Activated T-helper 2 cell treated with anti-CD3 and anti-CD28 coated beads, Interferon-gamma antibody, Interleukin-2, Interleukin-4, amounts not matched to agents 10 μg/mL and 5 μg/mL and 100 μg/mL, durations not matched to agents 14 hours and 24 hours and 36 hours (primary cell): ENCODE measurements at regions of chr18 and their contacts with region 1.

Region 1: DNA sequence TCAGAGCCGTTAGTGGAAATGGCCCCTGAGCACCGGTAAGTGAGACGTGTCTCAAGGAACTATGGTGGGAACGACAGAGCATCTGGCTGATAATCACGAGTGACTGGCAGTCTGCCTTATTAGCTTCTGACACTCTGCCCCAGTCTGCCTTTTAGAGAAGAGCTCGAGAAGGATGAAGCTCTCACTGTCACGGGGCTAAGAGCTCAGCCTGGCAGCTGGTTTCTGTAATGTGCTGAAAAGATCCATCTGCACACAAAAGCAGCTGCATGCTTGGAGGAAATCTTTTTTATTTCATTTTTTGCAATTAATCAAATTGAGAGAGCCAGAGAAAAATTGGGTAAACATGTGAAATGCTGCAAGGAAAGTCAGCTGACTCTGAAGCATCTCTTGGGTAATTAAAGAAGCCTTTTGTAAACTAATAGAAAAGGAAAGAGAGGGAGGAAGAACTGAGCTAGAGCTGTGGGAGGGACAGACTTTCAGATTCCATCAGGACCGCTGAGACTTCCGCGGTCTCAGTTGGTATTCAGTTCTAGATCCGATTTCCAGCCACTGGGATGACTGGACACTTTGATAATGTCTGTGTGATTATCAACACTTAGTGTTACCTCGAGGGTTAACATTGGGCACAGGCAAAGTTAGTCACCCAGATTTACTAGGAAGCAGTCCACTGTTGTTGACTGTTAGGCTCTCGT is 24.4 kb downstream of the MBP start:
- DNase-seq: no peak
- H3K4me3 Mint-ChIP-seq: no peak overlapping the region
- H3K27ac Mint-ChIP-seq: peak overlapping the region; percentile 62
- H3K4me1 Mint-ChIP-seq: peaks cover 85% of the 10 kb centered on the region
- H3K27me3 Mint-ChIP-seq: no peaks in the 10 kb centered on the region

Region 2: DNA sequence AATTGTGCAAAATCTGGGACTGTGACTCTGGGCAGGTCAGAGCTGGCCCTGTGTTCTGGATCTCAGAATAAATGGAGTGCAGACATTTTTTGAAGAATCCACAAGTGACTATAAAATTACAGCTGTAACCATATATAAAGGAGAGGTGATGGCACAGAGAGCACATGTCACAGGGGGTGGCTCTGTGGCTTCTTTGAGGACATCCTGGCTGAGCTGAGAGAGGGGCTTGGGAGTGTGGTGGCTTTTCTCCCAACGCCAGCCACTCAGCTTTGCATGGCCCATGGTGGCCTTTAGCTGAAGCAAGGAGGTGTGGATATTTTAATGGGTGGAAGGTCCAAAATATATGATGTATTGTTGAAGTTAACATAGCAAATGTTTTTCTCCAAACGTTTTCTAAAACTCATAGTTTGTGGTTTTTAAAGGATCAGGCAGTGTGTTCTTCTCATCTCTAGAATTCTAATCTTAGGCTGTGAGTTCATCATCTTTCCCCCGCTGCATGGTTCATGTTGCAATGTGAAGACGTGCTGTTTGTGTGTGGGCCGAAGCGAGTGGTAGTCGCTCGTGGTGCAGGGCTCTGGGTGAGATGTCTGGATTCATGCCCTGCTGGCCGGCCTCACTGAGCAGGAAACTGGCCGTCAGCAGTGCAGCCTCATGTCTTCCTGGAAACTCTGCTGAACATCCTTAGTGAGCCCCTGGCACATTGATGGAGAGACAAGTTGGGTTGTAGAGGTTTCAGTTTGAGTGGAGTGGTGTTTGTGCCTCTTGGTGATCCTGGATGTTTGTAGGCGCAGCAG is 175.9 kb before region 1 on chr18:
- intact Hi-C with region 1: loop called (anchors 2 kb)
- DNase-seq: no peak
- H3K4me3 Mint-ChIP-seq: peak overlapping the region; percentile 23
- H3K27ac Mint-ChIP-seq: peak overlapping the region; percentile 90
- H3K4me1 Mint-ChIP-seq: peaks cover 17% of the 10 kb centered on the region
- H3K27me3 Mint-ChIP-seq: no peaks in the 10 kb centered on the region

Region 3: DNA sequence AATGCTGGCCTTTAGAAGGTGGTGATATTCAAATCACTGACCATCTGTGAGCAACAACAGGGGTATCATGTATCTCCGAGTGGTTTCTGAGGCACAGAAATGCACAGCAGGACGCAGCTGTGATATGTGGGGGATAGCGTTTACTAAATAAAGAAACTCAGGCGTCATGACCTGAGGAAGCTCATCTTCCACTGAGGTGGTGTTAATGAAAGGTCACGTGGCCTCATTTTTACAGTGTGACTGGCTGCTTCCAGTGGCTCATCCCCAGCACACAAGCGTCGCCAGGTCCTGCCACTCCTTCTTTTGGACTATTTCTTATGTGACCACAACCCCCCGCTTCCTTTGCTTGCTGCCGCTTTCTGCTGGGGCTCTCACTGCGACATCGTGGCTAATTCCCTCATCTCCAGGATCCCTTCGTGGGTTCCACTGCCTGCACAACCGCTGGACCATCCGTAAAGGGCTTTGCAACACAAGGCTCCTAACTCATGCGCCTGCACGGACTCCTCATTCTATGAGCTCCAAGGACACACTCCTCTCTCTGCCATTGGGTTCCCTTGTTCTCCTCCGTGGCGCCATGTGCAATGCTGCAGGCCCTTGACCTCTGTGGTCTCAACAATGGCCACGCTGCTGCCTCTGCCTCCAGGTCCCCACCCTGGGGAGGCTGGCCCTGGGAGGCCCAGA is 84.9 kb before region 1 on chr18:
- intact Hi-C with region 1: no loop called
- DNase-seq: no peak
- H3K4me3 Mint-ChIP-seq: no peak overlapping the region
- H3K27ac Mint-ChIP-seq: no peak overlapping the region
- H3K4me1 Mint-ChIP-seq: peaks cover 5% of the 10 kb centered on the region
- H3K27me3 Mint-ChIP-seq: no peaks in the 10 kb centered on the region